ENCODE measurements at regions of chr2 and their contacts with region 1.

Region 1: GRCh38 chr2:48045613-48046012 is 139.3 kb upstream of the FBXO11 start:
- DNase-seq: no peak

Region 2: GRCh38 chr2:48016225-48017019 is 29.2 kb before region 1 on chr2:
- intact Hi-C with region 1: loop called in 1 of 2 experiments (anchors 2 kb)
- DNase-seq: no peak

Region 3: DNA sequence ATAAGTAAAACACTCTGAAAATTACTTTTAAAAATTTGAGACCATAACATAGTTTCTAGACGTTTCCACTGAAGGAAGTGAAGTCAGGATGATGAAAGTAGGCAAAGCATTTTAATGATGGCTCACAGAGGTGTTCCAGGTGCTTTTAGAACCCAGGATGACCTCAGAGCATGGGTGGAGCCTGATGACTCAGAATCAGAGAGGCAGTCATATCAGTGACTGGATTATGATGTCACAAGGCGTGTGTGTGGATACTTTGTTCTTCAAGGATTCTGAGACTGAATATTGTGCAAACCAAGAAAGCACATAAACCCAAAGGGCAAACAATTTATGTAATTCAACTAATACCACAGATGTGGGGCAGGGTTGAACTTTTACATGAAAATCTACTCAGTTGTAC is 68.6 kb after region 1 on chr2:
- intact Hi-C with region 1: no loop called
- DNase-seq: no peak

Measured in posterior vena cava (tissue), 2 donors.